BJ (cell line): ENCODE measurements at regions of chr1 and their contacts with region 1.

Region 1: DNA sequence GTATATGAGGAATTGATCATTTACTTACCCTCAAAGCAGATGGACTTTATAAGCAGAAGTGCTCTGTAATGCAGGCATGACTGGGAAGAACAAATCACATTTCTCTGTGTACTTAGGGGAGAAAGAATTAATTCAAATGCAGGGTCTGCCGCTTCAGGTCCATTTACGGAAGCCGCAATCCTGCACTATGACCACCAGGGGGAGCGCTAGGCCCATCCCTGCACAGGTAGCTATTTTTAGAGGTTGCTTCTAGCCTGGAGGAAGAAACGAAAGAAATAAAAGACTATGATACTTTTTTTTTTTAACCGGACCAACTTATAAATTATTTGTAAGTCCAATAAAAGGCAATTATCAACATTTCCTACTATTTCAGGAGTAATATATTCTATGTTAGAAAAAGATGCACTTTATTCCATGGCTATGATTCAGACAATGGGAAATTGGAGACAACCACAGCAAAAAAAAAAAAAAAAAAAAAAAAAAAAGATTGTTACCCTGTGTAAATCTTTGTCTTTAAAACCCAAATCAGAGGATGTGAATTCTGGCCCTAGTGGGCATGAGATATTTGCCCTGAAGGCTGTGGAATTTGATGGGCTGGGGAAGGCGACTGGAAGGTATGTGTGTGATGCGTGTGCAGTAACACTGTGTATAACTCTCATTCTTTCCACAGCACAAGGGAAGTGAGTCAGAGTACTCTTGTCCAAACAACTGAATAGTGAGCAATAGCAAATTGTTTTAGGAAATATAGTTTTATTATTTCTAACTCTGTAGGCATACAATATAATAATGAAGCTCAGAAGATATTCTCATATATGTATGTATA is 12.9 kb upstream of the FYB2 start:
- DNase-seq: peak; percentile 85
- H3K4me3 ChIP-seq: no peak overlapping the region
- H3K27me3 ChIP-seq: no peaks in the 10 kb centered on the region
- CTCF ChIP-seq: peak; percentile 95

Region 2: DNA sequence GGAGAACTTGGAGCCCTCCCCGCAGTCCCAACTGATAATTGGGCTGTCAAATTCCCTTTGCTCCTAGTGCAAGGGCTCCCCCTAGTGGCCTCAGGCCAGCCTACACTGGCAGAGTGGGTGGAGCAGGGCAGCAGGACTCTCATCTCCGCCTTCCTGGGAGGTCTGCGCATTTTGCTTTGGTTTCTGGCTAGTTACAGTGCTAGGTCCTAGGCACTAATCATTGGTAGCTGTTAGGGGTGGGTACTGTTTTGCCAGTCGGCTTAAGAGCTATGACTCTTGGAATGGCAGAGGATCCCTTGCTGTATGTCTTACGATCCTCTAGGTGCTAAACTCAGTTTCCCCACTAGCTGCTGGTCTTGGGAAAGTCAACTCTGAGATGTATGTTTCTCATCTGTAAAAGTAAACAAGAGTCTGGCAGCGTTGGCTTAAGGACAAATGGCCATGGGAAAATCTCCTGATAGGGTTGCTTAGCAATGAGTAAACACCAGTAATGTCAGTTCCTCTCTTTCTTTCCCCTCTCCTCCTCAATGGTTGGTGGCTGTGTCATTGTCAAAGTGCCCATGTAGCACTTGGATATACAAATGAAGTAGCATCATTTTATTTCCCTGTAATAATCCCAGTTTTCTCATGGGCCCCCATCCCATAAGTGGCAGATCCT is 10.8 kb before region 1 on chr1:
- CTCF ChIA-PET with region 1: interaction called, 11 read pairs
- POLR2A ChIA-PET with region 1: no interaction called
- DNase-seq: no peak
- H3K4me3 ChIP-seq: no peak overlapping the region
- H3K27me3 ChIP-seq: no peaks in the 10 kb centered on the region
- CTCF ChIP-seq: peak; percentile 98

Region 3: DNA sequence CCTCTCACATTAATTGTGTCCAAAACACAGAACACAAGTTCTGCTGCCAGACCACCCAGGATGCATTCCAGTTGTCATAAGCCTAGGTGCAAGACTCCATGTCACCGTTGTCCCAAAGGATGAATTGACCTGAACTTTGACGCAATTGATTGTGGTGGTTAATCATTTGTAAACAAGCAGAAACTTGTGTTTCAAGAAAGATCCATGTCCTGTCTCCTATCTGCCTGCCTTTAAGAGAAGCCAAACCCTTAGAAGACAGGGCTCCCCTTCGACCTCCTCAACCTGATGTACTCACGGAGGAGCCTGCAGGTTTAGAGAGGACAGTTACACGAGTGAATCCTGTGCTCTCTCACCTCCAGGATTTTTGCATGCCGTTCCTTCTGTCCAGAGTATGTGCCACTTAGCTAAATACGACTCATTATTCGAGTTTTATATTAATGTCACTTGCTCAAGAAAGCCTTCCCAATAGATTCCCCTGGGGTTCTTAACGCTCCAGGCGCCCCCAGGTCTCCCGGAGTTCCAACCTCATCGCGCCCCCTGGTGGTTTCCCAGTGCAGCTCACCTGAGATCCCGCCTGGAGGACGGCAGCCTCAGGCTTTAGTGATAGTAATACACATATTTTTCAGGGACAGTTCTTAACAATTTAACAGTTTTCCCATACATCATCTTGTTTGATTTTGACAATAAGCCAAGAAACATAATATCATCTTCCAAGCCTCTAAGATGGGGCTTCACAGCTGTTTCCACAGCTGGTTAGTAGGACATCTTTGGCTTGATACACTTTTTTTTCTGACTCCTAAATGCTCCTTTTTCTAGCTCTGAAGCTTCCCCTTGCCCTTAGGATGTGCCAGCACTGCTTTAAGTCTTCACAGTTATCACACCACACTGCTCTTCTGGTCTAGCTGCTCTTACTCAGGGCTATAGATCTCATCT is 136.1 kb after region 1 on chr1:
- CTCF ChIA-PET with region 1: interaction called, 22 read pairs
- POLR2A ChIA-PET with region 1: no interaction called
- DNase-seq: no peak
- H3K4me3 ChIP-seq: no peak overlapping the region
- H3K27me3 ChIP-seq: no peaks in the 10 kb centered on the region
- CTCF ChIP-seq: peak; percentile 73

Region 4: GRCh38 chr1:57061369-57061768 is 229.3 kb after region 1 on chr1:
- CTCF ChIA-PET with region 1: interaction called, 11 read pairs
- POLR2A ChIA-PET with region 1: no interaction called
- DNase-seq: no peak
- H3K4me3 ChIP-seq: no peak overlapping the region
- H3K27me3 ChIP-seq: no peaks in the 10 kb centered on the region
- CTCF ChIP-seq: no peak